Activated naive CD4-positive, alpha-beta T cell treated with anti-CD3 and anti-CD28 coated beads, Interleukin-2, amount 10 ng/mL, durations not matched to agents 7 days and 5 days (primary cell): ENCODE measurements at regions of chr10 and their contacts with region 1.

Region 1: DNA sequence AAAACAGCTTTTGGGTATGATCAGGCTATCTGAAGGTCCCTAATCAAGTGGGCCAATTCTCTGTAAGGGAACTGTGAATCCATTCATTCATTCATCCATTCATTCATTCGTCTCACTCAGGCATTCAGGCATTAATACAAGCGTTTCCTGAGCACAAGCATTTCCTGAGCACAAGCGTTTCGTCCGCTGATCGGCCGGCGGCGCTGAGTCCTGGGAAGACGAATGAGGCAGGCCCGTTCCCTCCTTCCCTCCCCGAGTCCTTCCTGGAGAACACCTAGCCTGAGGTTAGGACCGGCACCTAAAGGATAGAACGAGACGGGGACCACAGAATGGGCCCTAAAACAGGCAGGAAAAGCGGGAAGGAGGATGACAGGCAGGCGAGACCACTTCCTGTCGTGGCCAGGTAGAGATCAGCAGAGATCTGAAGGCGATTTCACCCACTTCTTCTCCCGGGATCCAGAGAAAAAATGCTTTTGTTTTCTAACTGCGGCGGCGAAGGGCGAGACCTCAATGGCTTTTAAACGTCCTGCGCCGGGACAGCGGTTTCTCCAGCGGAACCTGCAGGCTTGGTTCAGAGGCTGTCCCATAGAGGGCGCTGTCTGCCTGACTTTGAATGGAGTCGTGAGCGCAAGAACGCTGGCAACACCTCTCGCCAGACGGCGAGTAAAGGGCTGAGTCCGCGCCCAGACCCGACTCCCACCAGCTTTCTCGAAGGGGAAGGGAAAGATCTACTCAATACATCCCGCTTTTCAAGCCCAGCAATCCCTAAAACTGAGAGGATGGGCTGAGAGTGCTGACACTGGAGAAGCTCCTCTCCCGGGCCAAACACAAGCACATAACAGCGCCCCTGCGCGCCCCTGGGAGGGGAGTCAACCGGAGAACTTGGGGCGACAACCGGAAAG is 2.9 kb upstream of the HMX3 start:
- DNase-seq: peak; percentile 90
- H3K4me3 Mint-ChIP-seq: peak overlapping the region; percentile 28
- H3K27ac Mint-ChIP-seq: peak overlapping the region; percentile 60
- H3K4me1 Mint-ChIP-seq: peaks cover 34% of the 10 kb centered on the region
- H3K27me3 Mint-ChIP-seq: peaks cover 90% of the 10 kb centered on the region

Region 2: GRCh38 chr10:123149568-123150270 is 16.9 kb after region 1 on chr10:
- CTCF ChIA-PET with region 1: interaction called, 28 read pairs
- DNase-seq: peak; percentile 60
- H3K4me3 Mint-ChIP-seq: peak overlapping the region; percentile 64
- H3K27ac Mint-ChIP-seq: peak overlapping the region; percentile 47
- H3K4me1 Mint-ChIP-seq: peaks cover 67% of the 10 kb centered on the region
- H3K27me3 Mint-ChIP-seq: peaks cover 70% of the 10 kb centered on the region